Activated T-helper 2 cell treated with anti-CD3 and anti-CD28 coated beads, Interferon-gamma antibody, Interleukin-2, Interleukin-4, amounts not matched to agents 10 μg/mL and 5 μg/mL and 100 μg/mL, durations not matched to agents 14 hours and 24 hours and 36 hours (primary cell): ENCODE measurements at regions of chr2 and their contacts with region 1.

Region 1: GRCh38 chr2:222976521-222977076 is 75.4 kb upstream of the KCNE4 start:
- DNase-seq: no peak
- H3K4me3 Mint-ChIP-seq: no peak overlapping the region
- H3K27ac Mint-ChIP-seq: no peak overlapping the region
- H3K4me1 Mint-ChIP-seq: no peaks in the 10 kb centered on the region
- H3K27me3 Mint-ChIP-seq: peaks cover 7% of the 10 kb centered on the region

Region 2: DNA sequence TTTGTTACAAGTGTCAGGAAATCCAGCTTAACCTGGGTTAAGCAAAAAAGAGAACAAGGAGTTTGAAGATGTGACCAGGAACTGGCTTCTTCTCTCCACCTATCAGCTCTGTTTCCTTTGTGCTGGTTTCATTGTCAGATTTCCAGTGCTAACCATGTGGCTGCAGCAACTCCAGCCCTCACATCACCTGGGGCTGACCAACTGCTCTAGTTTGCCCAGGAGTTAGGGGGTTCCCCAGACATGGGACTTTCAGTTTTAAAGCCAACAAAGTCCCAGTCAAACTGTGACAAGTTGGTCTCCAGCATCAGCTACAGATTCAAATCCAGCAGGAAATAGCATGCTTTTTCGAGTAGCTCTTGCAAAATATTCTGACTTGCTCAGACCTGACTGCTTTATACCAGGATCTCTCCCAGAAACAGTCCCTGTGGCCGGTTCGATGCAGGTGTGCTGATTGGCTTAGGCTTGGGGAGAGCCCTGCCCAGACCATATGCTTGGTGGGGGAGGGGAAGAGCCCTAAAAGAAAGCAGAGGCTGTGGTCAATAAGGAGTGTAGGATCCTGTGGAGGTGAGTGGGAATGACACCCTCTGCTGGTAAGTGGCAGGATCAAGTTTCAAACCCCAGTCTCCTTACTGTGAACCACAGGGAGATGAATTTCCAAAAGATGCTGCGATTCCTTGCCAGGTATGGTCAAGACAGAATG is 124.9 kb after region 1 on chr2:
- intact Hi-C with region 1: loop called (anchors 10 kb)
- DNase-seq: no peak
- H3K4me3 Mint-ChIP-seq: no peak overlapping the region
- H3K27ac Mint-ChIP-seq: no peak overlapping the region
- H3K4me1 Mint-ChIP-seq: no peaks in the 10 kb centered on the region
- H3K27me3 Mint-ChIP-seq: no peaks in the 10 kb centered on the region

Region 3: DNA sequence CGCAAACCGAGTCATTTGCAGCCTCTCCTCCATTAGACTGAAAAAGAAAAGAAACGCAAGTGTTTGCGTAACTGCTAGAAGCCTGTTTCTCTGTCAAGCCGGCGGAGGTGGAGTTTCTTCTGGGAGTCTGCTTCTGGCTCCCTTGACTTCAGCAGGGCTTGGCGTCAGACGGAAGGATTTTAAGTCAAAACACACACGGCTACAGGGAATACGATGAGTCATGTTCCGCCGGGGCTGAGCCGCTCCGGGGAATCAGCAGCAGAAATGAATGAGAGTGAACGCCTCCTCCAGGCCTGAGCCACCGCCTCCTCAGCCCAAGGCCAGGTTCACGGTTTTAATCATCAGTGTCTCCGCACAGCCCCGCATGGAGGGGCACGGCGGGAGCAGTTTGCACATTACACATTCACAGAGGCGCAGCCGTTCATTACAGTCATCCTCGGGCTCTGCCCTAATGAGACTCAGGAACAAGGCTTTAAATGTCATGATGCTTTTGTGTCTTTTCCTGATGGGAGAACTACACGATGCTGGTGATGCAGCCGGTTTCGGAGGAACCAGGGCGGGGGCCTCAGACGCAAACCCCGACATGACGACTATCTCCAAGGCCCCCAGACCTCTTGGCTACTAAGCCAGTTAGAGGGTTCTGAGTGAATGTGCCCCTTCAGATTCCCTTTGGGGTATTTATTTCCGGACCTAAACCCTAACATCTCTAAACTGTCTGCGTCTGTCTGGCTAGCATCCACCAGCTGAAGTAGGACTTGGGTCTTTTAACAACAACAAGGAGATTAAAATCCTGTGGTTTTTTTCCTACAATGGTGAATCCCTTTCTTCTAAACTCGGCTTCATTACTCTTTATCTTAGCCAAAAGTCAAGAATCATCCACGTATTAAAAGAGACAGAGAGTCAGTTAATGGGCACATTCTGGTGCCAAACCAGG is 636.7 kb after region 1 on chr2:
- intact Hi-C with region 1: loop called (anchors 10 kb)
- DNase-seq: no peak
- H3K4me3 Mint-ChIP-seq: no peak overlapping the region
- H3K27ac Mint-ChIP-seq: no peak overlapping the region
- H3K4me1 Mint-ChIP-seq: peaks cover 2% of the 10 kb centered on the region
- H3K27me3 Mint-ChIP-seq: peaks cover 35% of the 10 kb centered on the region